ENCODE measurements at regions of chr7 and their contacts with region 1.

Region 1: DNA sequence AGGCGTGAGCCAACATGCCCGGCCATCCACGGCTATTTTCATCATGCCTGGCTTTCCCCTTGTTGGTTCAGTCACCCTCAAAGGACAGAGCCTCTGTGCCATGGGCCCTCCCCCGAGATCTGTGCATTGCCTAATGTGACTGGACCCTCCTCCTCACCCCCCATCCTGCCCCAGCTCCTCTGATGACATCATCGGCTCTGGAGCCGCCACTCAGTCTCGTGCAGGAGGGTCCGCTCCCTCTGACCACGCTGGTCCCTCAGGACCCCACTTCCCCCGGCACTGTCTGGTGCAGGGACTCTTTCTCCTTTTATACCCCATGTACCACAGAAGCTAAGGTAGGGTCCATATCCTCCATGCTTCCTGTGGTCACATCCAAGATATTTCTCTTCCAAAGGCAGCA is 33.2 kb upstream of the BAIAP2L1 start:
- DNase-seq: no peak
- H3K4me3 ChIP-seq: no peak overlapping the region
- H3K27ac ChIP-seq: no peak overlapping the region
- H3K4me1 ChIP-seq: no peaks in the 10 kb centered on the region
- H3K27me3 ChIP-seq: no peaks in the 10 kb centered on the region
- CTCF ChIP-seq: no peak

Region 2: GRCh38 chr7:98841179-98841997 is 407.3 kb after region 1 on chr7:
- intact Hi-C with region 1: loop called (anchors 5 kb)
- DNase-seq: peak; percentile 63 to 83
- H3K4me3 ChIP-seq: no peak overlapping the region
- H3K27ac ChIP-seq: peak overlapping the region; percentile 43 to 53
- H3K4me1 ChIP-seq: peaks cover 0 to 17% (median 16%) of the 10 kb centered on the region in 4 donors
- H3K27me3 ChIP-seq: no peaks in the 10 kb centered on the region
- CTCF ChIP-seq: peak; percentile 96 to 99